Lower leg skin (tissue), 4 donors: ENCODE measurements at regions of chr12 and their contacts with region 1.

Region 1: DNA sequence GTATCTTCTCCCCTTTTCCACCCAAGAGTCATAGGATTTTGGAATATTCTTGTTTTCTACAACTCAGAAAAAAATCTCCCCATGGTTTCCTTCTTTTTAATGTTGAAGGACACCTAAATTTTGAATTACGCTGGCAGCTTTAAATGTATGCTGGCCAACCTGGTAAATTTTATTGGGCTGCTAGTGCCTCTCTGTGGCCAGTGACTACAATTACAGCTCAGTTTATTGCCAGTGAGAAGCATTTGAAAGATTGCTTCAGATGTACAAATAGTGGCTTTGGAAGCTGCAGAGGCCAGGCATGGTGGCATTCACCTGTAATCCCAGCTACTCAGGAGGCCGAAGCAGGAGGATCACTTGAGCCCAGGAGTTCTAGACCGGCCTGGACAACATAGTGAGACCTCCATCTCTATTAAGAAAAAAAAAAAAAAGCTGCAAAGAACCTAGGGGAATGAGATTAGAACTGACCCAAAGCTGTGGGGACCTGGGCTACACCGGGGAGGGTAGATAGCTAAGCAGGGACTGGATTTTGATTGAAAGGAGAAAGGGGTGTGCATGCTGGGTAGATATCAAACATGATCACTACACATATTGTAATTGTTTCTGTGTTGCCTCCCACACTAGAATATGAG is 7.6 kb upstream of the RAB21 start:
- DNase-seq: peak in 1 of 2 donors; percentile 35
- H3K4me3 ChIP-seq: no peak overlapping the region
- CTCF ChIP-seq: no peak
- POLR2A ChIP-seq: no peak

Region 2: DNA sequence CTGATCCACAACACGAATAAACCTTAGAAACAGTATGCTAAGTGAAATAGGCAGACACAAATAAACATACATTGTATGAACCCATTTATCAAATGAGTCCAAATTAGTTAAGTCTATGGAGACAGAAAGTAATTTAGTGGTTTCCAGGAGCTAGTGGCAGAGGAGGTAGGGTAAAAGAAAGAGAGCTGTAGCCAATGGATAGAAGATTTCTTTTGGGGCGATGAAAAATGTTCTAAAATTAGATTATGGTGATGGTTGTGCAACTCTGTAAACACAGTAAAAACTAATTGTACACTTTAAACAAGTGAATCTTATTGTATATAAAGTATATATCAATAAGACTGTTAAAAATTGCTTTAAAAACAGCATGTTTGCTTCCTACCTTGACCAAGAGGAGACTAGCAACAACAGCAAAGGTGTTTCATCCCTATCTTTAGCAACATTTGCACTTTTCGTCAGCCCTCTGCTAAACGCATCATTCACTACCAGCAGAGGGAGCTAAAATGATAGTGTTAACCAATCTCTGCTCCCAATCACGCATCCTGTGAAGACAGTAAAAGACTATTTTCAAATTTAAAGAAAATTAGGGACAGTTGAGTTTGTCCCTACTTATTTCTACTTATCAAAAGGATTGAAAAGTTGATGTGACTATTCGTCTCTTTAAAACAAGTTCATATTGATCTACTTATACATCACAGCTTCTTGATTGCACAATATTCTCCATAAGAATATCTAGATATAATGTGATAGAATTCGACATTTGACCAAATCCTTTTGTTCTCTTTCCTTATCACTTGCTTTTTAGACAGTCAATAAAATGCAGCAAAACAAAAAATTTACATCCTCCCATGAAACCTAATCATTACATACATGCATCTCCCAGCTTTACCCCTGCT is 331.5 kb before region 1 on chr12:
- intact Hi-C with region 1: loop called (anchors 10 kb)
- DNase-seq: no peak
- H3K4me3 ChIP-seq: no peak overlapping the region
- CTCF ChIP-seq: no peak
- POLR2A ChIP-seq: no peak

Region 3: DNA sequence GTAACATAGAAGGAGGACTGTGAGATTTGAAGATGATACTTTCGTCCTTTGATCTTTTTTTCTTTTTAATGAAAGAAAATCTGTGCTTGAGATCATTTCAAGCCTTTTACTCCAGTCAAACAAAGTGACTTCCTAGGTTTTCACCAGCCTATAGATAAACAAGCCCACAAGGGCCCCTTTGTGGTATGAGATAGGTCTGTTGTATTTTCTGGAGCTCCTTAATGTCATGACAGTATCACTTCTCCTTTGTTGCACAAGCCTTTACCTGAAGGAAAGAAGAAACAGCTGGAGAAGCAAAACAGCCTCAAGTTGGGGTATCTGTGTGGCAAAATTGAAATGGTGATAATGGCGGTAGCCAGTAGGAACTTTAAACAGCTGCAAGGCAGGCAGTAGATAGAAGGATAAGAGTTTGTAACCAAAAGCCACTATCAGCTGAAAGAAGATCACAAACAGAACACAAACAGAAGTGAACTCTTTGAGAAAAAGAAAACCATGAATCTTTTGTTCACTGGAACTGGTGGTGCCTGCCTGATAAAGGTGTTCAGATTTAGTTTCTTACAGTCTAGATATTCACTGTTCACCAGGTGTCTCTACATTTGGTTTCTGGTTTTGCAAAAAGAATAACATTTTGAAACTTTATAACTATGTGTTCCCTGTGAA is 210.7 kb before region 1 on chr12:
- intact Hi-C with region 1: no loop called
- DNase-seq: no peak
- H3K4me3 ChIP-seq: no peak overlapping the region
- CTCF ChIP-seq: no peak
- POLR2A ChIP-seq: no peak

Region 4: DNA sequence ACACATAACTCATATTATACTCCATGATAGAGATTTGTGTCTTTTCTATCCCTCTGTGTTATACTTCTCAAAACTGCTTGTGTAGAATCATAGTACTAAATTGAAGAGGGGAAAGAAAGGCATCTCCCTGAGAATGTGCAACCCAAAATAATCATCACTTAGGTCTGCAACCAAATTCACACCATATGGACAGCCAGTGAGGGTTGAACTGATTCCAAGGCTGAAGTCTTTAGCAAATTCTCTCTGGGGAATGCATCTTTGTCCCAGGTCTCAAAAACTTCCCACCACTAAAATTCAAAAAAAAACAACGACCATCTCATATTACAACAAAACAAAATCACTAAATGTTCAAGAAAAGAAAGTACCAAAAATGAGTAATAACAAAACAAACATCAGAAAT is 94.4 kb before region 1 on chr12:
- intact Hi-C with region 1: loop called (anchors 10 kb)
- DNase-seq: no peak
- H3K4me3 ChIP-seq: no peak overlapping the region
- CTCF ChIP-seq: no peak
- POLR2A ChIP-seq: no peak